Posterior cingulate gyrus (tissue), 11 donors: ENCODE measurements at regions of chr3 and their contacts with region 1.

Region 1: DNA sequence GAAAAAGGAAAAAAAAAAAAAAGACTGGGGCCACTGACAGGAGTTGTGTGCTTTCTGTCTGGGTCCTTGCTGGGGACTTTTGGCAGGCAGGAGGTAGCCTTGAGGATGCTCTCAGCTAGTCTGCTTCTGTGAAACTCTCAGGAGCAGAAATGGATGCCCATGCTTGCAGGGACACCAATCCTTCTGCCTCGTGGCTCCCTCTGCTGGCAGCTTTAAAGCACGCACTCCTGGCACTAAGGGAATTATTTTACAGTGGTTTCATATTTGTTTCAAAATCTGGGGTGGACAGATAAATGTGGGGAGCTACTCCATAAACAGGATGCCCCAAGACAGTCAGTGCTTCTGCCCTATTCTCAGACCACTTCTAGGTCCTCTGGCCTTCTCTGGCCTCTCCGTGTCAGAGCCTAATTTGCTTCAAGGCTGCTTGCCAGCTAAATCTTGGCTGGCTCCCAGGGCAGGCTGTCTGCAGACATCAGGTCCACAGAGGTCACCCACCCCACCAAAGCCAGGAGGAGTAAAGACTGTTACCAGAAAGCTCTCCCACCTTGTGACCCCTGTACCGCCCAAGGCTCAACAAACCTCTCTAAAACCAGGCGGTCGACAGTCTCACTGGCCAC is 17.1 kb downstream of the TRAIP start:
- DNase-seq: peak; percentile 67 to 97 (median 84)

Region 2: DNA sequence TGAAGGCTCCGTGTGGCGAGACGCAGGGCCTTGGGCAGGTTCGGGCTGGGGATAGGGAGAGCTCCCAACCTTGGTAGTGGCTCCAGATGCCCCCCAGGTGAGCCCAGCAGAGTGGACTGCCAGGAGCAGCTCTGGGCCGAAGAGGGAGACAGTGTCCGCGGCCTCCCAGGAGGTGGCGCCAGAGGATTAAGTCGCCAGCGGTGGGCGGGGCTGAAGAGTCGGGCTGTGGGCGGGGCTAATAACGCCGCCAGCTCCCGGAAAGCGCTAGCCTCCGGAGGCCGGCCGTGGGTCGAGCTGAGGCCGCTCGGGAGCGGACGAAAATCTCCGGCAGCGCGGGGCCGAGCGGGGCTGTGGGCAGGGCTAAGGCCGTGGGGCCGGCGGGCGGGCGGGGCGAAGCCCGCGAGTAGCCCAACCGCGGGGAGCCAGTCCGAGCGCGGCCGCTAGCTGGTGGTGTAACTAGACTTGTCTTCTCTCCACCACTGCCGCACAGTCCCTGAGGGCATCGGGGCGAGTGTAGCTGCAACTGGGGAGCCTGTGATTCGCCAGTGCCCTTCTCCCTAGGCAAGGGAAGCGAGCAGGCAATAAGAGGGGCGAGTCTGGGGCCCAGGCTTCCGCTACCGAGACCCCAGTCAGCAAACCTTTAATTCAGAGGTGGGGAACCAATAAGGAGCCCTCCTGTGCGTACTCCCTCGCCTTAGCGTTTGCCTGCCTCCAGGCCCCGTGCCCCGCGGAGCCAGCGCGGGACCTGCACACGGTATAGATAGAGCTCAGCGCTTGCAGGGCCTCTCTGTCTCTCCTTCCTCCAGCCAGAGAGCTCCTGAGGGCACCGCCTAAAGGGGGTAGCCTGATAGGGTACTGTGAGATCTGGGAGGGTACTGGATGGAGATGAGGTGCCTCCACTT is 299.4 kb before region 1 on chr3:
- intact Hi-C with region 1: loop called (anchors 1 kb)
- DNase-seq: peak; percentile 90 to 99 (median 94)

Region 3: DNA sequence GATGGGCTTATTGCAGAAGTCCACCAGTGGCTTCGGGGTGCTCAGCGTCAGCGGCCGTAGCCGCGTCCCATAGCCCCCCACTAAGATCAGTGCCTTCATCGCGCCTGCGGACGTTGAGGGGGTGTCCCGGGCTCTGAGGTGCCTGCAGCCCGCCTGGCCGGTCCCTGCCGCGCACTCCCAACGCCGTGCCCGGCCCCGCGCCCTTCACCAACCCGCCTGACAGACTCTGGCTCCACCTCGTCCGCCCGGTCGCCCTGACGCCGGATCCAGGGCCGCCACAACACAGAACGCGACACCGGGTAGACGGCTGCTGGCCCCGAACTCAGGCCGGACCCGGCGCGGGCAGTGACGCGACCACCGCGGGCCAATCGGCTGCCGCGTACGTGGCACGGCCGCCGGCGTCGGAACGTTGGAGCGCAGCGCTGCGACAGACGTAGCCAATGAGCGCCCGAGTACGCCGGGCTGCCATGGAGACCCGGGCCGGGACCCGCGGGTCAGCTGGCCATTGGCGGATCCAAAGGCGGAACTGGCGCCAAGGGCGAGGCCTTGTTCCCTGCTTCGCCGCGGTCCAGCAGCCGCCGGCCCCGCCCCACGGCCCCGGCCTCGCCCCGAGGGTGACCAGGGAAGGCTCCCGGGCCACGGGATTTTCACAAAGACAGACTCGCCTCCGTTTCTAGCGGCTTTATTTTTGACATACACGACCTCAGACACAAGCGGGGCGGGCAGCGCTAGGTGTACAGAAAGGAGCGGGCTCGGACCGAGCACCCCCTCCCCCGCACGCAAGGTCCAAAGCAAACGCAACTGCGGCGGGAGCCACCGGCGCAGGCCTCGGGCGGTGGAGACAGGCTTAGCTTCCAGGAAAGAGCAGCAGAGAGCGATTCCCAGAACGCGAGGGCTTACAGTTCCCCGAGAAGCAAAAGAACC is 115.4 kb before region 1 on chr3 and contains the start of gene GMPPB:
- intact Hi-C with region 1: loop called (anchors 10 kb)
- DNase-seq: peak; percentile 92 to 100 (median 97)

Region 4: DNA sequence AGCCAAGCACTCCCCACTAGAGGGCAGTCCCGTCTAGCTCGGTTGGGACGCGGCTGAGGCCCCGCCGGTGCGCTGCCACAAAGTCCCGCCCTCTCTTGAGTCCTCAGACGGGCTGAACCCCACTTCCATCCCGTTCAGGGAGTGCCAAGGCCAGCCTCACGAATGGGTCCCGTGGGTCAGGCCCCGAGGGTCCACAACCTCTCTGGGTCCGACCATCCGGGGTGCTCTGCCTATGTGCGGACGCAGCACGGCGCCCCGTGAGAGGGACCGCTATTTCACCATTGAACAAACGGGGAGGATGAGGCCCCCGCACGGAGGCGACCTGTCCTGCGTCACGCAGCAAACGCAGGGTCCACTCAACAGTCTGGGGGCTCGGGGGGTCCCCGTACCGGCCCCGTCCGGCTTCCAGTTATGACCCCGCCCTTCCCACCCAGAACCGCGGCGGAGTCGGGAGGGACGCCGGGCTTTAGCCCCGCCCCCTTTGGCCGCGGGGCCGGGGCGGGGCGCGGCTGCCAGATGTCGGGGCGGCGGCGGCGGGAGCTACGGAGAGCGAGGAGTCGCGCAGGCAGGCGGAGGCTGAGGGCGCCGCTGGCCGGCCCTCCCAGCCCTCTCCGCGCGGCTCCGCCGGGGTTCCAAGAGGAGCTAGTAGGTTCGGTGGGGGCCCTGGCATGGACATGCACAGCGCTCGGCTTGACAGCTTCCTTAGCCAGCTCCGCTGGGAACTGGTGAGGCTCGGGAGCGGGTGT is 36.4 kb before region 1 on chr3 and contains the start of gene INKA1:
- intact Hi-C with region 1: loop called (anchors 1 kb)
- DNase-seq: peak; percentile 80 to 98 (median 90)

Region 5: GRCh38 chr3:49906004-49906743 is 66.9 kb after region 1 on chr3:
- intact Hi-C with region 1: loop called (anchors 5 kb)
- DNase-seq: peak in 9 of 10 donors; percentile 23 to 94 (median 62)